Naive thymus-derived CD4-positive, alpha-beta T cell (primary cell): ENCODE measurements at regions of chr10 and their contacts with region 1.

Region 1: GRCh38 chr10:110746254-110746826 is 102.2 kb downstream of the RBM20 start:
- DNase-seq: peak in 8 of 9 donors; percentile 31 to 56 (median 46)
- ATAC-seq: peak; percentile 55
- H3K4me3 ChIP-seq: no peak overlapping the region
- H3K4me3 Mint-ChIP-seq: no peak overlapping the region
- H3K27ac ChIP-seq: no peak overlapping the region
- H3K27ac Mint-ChIP-seq: peak overlapping the region in 8 of 9 donors; percentile 51 to 94 (median 88)
- H3K4me1 ChIP-seq: peaks cover 5 to 47% of the 10 kb centered on the region in 2 donors
- H3K4me1 Mint-ChIP-seq: peaks cover 23 to 95% (median 87%) of the 10 kb centered on the region in 7 donors
- H3K27me3 ChIP-seq: no peaks in the 10 kb centered on the region
- H3K27me3 Mint-ChIP-seq: no peaks in the 10 kb centered on the region

Region 2: GRCh38 chr10:110724116-110724921 is 22.0 kb before region 1 on chr10:
- CTCF ChIA-PET with region 1: no interaction called
- POLR2A ChIA-PET with region 1: interaction called, 3 read pairs
- intact Hi-C with region 1: loop called in 1 of 2 experiments (anchors 1 kb)
- DNase-seq: peak in 5 of 9 donors; percentile 32 to 42 (median 38)
- ATAC-seq: peak; percentile 53
- H3K4me3 ChIP-seq: peak overlapping the region; percentile 14
- H3K4me3 Mint-ChIP-seq: peak overlapping the region; percentile 34 to 81 (median 69)
- H3K27ac ChIP-seq: peak overlapping the region; percentile 61
- H3K27ac Mint-ChIP-seq: peak overlapping the region in 8 of 9 donors; percentile 69 to 96 (median 88)
- H3K4me1 ChIP-seq: peaks cover 14 to 34% of the 10 kb centered on the region in 2 donors
- H3K4me1 Mint-ChIP-seq: peaks cover 25 to 56% (median 44%) of the 10 kb centered on the region in 7 donors
- H3K27me3 ChIP-seq: no peaks in the 10 kb centered on the region
- H3K27me3 Mint-ChIP-seq: peaks cover 0 to 2% (median 0%) of the 10 kb centered on the region in 5 donors

Region 3: GRCh38 chr10:110803830-110804338 is 57.5 kb after region 1 on chr10:
- CTCF ChIA-PET with region 1: interaction called, 3 read pairs
- POLR2A ChIA-PET with region 1: interaction called, 3 read pairs
- intact Hi-C with region 1: loop called (anchors 1 to 2 kb)
- DNase-seq: peak in 2 of 9 donors; percentile 25 to 36
- ATAC-seq: peak; percentile 67
- H3K4me3 ChIP-seq: peak overlapping the region; percentile 29
- H3K4me3 Mint-ChIP-seq: peak overlapping the region in 9 of 10 donors; percentile 12 to 78 (median 69)
- H3K27ac ChIP-seq: peak overlapping the region; percentile 61
- H3K27ac Mint-ChIP-seq: peak overlapping the region; percentile 58 to 100 (median 93)
- H3K4me1 ChIP-seq: peaks cover 25 to 34% of the 10 kb centered on the region in 2 donors
- H3K4me1 Mint-ChIP-seq: peaks cover 30 to 53% (median 47%) of the 10 kb centered on the region in 7 donors
- H3K27me3 ChIP-seq: no peaks in the 10 kb centered on the region
- H3K27me3 Mint-ChIP-seq: no peaks in the 10 kb centered on the region

Region 4: DNA sequence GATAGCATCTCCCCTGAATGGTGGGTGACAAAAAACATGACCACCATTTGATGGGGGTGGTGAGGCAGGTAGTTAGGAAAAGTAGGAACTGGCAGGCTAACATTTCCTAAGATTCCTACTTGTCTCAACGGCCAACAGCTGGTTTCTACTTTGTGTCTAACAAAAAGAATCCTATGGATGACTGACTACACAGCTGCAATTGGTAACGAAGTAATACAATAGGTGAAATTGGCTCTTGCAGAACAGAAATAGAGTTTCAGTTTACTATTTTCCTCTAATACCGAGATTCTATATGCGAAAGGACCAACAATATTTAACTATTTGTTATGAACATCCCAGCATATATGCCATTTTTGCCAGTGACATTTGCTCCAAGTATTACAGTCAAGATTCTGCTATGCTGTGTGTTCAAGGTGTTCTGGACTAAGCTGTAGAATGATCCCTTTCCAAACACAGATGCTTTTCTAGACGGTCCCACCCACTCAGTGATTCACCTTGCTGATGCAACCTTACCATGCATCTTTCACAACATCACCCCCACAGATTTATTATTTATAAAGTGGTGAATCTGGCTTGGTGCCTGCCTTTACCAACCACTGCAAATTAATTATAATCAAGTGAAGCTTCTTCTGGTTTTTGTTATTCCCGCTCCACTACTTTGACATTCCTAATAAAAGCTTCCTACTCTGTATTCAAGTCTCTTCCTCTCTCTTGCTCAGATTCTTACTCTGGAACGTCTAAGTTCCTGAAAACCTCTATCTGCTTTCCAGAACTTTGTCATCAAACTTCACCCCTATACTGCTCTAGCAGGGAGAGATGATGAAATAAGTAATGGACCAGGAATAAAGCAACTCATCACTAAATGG is 155.8 kb after region 1 on chr10:
- CTCF ChIA-PET with region 1: interaction called, 20 read pairs
- POLR2A ChIA-PET with region 1: no interaction called
- intact Hi-C with region 1: no loop called
- DNase-seq: no peak
- ATAC-seq: peak; percentile 46
- H3K4me3 ChIP-seq: no peak overlapping the region
- H3K4me3 Mint-ChIP-seq: no peak overlapping the region
- H3K27ac ChIP-seq: no peak overlapping the region
- H3K27ac Mint-ChIP-seq: peak overlapping the region in 6 of 9 donors; percentile 32 to 73 (median 44)
- H3K4me1 ChIP-seq: no peaks in the 10 kb centered on the region
- H3K4me1 Mint-ChIP-seq: peaks cover 8 to 40% (median 22%) of the 10 kb centered on the region in 7 donors
- H3K27me3 ChIP-seq: no peaks in the 10 kb centered on the region
- H3K27me3 Mint-ChIP-seq: no peaks in the 10 kb centered on the region

Region 5: GRCh38 chr10:111207500-111207899 is 461.2 kb after region 1 on chr10:
- CTCF ChIA-PET with region 1: interaction called, 3 read pairs
- POLR2A ChIA-PET with region 1: no interaction called
- intact Hi-C with region 1: loop called in 1 of 2 experiments (anchors 1 kb)
- DNase-seq: peak in 5 of 9 donors; percentile 1 to 19 (median 12)
- ATAC-seq: no peak
- H3K4me3 ChIP-seq: no peak overlapping the region
- H3K4me3 Mint-ChIP-seq: no peak overlapping the region
- H3K27ac ChIP-seq: no peak overlapping the region
- H3K27ac Mint-ChIP-seq: no peak overlapping the region
- H3K4me1 ChIP-seq: no peaks in the 10 kb centered on the region
- H3K4me1 Mint-ChIP-seq: no peaks in the 10 kb centered on the region
- H3K27me3 ChIP-seq: no peaks in the 10 kb centered on the region
- H3K27me3 Mint-ChIP-seq: peaks cover 0 to 16% (median 11%) of the 10 kb centered on the region in 5 donors

Region 6: DNA sequence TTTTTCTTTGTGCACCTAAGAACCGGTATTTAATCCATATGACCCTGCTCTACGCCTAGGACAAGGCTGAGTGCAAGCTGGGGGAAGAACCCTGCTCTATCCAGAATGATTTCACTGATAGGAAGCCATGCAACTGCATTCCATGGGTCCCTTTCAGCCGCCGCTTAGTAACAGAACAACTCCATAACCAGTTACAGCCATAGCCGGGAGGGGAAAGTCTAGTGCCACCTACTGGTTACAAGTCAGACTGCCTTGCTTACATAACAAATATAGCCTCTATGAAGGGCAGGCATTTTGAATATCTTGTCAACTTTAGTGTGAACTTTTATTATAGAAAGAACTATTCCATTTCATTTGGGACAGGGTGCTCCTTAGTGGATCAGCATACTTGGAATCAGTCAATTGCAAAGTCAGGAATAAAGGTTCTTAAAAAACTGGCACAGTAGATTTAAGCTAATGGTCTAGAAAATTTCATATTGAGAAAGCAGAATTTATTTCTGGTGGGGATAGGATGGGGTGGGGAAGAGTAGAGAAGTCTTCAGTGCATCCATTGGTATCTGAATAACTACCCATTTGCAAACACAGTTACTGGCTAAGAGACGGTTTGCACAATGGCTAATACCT is 852.2 kb after region 1 on chr10:
- CTCF ChIA-PET with region 1: no interaction called
- POLR2A ChIA-PET with region 1: no interaction called
- intact Hi-C with region 1: loop called in 1 of 2 experiments (anchors 10 kb)
- DNase-seq: peak in 8 of 9 donors; percentile 1 to 47 (median 30)
- ATAC-seq: peak; percentile 62
- H3K4me3 ChIP-seq: no peak overlapping the region
- H3K4me3 Mint-ChIP-seq: no peak overlapping the region
- H3K27ac ChIP-seq: no peak overlapping the region
- H3K27ac Mint-ChIP-seq: no peak overlapping the region
- H3K4me1 ChIP-seq: no peaks in the 10 kb centered on the region
- H3K4me1 Mint-ChIP-seq: no peaks in the 10 kb centered on the region
- H3K27me3 ChIP-seq: no peaks in the 10 kb centered on the region
- H3K27me3 Mint-ChIP-seq: peaks cover 0 to 21% (median 12%) of the 10 kb centered on the region in 5 donors